Mucosa of descending colon (tissue), 3 donors: ENCODE measurements at regions of chr11 and their contacts with region 1.

Region 1: GRCh38 chr11:19546325-19546724 is 166.3 kb upstream of the NAV2 start:
- DNase-seq: no peak
- ATAC-seq: peak; percentile 62
- H3K4me3 ChIP-seq: no peak overlapping the region
- H3K4me1 ChIP-seq: no peaks in the 10 kb centered on the region
- CTCF ChIP-seq: no peak

Region 2: GRCh38 chr11:19259487-19260345 is 286.6 kb before region 1 on chr11:
- intact Hi-C with region 1: loop called (anchors 5 to 10 kb)
- DNase-seq: peak; percentile 62 to 86 (median 79)
- ATAC-seq: peak; percentile 92
- H3K4me3 ChIP-seq: no peak overlapping the region
- H3K4me1 ChIP-seq: no peaks in the 10 kb centered on the region
- CTCF ChIP-seq: peak; percentile 94

Region 3: DNA sequence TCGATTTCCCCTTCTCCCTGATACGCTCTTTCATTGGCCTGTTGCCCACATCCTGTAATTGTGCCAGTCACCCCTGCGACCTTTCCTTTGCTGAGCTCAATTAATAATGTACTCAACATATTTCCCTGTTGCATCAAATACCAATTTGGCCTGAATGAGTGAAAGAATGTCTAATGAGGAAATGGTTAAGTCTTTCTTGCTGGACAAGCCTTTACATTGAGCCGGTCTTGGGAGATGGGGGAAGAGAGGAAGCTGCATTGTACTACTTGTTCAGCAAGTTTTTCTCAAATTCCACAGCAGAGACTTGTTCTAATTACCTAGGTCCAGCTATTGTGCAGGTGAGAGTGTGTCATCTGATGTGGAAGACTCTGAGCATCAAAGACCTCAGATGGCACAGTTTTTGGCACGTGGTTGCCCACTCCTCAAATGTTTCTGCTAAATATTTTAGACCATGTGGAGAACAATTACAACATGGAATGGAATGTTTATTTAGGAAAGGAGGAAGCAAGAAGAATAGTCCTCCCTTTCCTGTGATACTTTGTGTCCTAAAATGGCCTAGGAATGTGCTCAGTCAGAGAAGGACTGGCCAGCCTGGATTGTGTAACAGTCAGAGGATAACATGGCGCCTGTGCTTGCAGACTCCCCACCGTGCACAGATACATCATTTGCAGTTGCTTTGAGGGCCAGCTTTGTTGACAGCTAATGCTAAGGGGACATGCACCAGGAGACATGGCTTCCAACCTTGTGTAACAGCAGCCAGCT is 176.0 kb before region 1 on chr11:
- intact Hi-C with region 1: no loop called
- DNase-seq: no peak
- ATAC-seq: peak; percentile 31
- H3K4me3 ChIP-seq: no peak overlapping the region
- H3K4me1 ChIP-seq: no peaks in the 10 kb centered on the region
- CTCF ChIP-seq: no peak

Region 4: DNA sequence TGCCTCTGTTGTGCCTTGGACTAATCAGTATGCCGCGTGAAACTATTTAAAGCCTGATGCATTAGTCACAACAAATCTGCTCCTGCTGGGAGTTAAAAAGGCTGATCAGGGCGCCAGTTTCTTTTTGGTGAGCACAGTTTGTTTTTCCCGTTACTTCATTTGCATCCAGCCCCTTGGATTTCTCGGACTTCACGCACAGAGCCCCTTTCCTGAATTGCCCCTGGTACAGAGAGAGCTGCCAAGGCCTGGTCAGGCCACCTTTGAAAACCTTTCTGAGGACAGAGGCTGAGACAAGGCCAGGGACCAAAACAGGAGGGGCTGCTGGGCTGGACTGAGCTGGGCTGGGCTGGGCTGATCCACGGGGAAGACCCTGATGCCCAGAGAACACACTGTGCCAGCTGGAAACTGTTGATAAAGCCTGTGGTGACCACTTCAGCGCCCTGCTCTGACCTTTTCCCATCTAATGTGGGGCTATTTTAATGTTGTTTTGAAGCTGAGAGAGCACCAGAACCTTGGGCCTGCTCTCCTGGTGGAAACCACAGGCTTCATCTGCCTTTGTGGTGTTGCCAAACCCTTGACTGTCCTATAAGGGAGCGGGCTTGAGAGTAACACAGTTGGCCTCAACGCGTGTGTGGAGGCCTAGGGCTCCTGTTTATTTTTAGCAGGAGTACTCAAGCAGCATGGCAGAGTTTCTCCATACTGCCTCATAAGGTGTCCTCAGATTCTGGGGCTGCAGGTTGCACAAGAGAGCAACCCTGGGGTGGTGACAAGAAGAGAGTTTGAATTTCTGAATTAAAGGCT is 210.6 kb after region 1 on chr11:
- intact Hi-C with region 1: no loop called
- DNase-seq: no peak
- ATAC-seq: no peak
- H3K4me3 ChIP-seq: no peak overlapping the region
- H3K4me1 ChIP-seq: peaks cover 7% of the 10 kb centered on the region
- CTCF ChIP-seq: no peak